ENCODE measurements at regions of chr1 and their contacts with region 1.

Region 1: DNA sequence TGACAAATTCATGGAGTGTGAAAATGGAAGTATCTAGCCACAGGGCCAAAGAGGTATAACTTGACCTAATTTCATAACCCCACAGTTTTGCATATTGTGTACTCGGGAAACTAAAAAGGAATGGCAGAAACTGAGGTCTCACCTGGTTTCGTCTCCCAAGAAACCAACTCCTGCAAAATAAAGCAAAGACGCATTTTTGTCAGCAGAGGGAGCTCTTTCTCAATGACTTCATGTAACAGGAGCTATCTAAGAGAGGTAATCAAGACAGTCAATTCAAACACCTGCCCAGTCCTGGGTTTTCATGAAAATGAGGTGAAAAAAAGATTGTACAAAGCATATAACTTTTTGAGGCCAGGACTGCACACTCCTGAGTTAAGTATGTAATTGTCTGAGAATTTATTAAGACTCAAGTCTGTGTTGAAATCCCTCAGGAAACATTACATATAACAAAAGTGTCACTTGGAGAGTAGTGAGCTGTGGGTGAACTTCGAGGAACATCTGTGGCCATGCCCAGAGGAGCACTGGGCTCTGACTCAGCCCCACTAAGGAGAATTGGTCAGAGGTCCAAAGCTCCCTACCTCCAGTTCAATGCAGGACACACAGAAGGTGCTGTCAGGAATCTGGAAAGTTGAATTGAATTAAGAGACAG is 17.6 kb downstream of the FCRL4 start:
- DNase-seq: peak; percentile 2
- H3K4me3 Mint-ChIP-seq: no peak overlapping the region
- H3K27ac Mint-ChIP-seq: no peak overlapping the region
- H3K4me1 Mint-ChIP-seq: no peaks in the 10 kb centered on the region
- H3K27me3 Mint-ChIP-seq: peaks cover 16% of the 10 kb centered on the region

Region 2: GRCh38 chr1:157691285-157691920 is 111.1 kb after region 1 on chr1:
- intact Hi-C with region 1: loop called (anchors 1 kb)
- DNase-seq: no peak
- H3K4me3 Mint-ChIP-seq: no peak overlapping the region
- H3K27ac Mint-ChIP-seq: no peak overlapping the region
- H3K4me1 Mint-ChIP-seq: no peaks in the 10 kb centered on the region
- H3K27me3 Mint-ChIP-seq: peaks cover 3% of the 10 kb centered on the region

Region 3: DNA sequence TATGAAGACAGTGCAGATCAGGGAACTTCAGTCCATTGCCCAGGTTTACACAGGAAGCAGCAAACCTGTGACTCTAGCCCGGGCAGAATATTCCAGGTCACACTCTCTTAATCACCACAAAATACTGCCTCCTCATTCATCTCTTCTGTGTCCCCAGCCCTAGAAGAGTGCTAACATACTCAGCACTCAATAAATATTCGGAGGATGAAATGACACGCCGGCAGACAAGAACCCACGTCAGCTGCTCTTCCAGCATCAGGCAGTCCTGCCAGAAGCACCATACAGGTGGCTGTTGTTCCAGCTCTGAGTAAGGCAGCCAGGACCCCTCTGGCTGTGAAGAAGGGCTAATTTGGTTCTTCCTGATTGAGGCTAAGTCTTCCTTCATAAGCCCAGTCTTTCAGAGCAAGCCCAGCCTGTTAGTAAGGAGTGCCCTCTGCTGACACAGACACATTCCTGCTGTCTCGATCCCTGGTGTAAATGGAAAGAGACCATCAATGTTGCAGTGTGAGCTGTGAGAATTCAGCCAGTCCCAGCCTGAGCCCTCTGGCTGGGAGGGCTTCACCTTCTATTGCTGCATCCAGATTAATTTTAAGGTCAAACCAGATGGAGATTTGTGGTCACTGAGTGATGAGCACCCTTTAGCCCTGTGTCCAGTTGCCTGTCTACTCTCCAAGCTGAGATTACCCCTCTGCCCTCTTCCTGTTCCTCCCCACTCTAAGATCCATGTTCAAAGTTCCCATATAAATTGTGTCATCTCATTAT is 368.2 kb after region 1 on chr1:
- intact Hi-C with region 1: loop called (anchors 5 kb)
- DNase-seq: no peak
- H3K4me3 Mint-ChIP-seq: no peak overlapping the region
- H3K27ac Mint-ChIP-seq: no peak overlapping the region
- H3K4me1 Mint-ChIP-seq: no peaks in the 10 kb centered on the region
- H3K27me3 Mint-ChIP-seq: peaks cover 9% of the 10 kb centered on the region

Measured in activated T-helper 1 cell treated with anti-CD3 and anti-CD28 coated beads, Interleukin-12 subunit alpha, Interleukin-12 subunit beta, Interleukin-2, Interleukin-4 antibody, amounts not matched to agents 30 ng/mL and 10 ng/mL and 1 ng/mL, durations not matched to agents 14 hours and 24 hours and 36 hours (primary cell).